GM13976 (cell line): ENCODE measurements at regions of chr3 and their contacts with region 1.

Region 1: DNA sequence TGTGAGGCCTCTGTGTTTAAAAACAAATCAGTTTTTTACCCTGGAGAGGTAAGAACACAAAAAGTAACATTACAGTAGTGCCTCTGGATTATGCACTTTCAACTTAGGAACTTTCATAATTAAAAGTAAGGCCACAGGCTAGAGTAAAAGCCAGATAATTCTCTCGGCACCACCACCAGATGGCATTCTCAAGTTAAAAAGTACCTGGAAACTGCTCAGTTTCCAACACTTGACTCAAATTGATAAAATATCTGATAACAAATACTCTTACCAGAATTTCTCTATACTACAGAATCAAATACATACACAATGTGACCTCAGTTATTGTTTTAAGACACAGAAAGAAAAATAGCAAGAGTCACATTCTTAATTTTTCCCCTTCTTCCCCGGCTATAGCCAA is 19.9 kb downstream of the SPICE1 start:
- DNase-seq: peak; percentile 47
- CTCF ChIP-seq: peak; percentile 40

Region 2: GRCh38 chr3:113205479-113205878 is 289.6 kb before region 1 on chr3:
- in situ Hi-C with region 1: no loop called
- DNase-seq: no peak
- CTCF ChIP-seq: no peak

Region 3: DNA sequence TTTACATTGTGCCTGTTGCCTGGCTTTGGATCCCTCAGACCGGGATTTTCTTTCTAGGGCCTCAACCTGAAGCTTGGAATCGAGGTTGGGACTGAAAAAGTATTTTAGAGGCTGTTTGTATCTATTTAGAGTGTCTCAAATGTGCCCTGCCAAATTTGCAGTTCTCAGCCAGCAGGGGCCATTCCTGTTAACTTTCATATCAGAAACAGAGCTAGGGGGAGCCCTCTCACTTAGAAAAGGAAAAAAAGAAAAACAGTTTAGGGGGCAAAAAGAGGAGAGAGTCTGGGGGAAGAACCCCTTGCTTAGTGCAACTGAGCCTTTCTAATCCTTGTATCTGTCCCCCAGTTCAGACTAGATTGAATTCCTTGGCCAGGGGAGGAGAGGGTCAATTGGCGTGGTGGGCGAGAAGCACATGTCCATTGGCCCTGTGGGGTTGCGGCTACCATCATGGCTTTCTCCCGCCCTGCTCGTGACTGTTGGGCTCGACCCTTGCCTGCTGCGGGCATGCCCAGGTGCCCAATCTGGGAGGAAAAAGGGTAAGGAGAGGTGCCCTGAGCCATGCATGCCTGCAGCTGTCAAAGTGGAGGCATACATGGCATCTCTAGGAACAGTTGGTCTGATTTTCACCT is 155.3 kb before region 1 on chr3:
- in situ Hi-C with region 1: no loop called
- DNase-seq: no peak
- CTCF ChIP-seq: peak; percentile 7

Region 4: GRCh38 chr3:113575206-113575605 is 80.2 kb after region 1 on chr3:
- in situ Hi-C with region 1: loop called (anchors 5 kb)
- DNase-seq: no peak
- CTCF ChIP-seq: no peak